Gastrocnemius medialis (tissue), 4 donors: ENCODE measurements at regions of chr2 and their contacts with region 1.

Region 1: DNA sequence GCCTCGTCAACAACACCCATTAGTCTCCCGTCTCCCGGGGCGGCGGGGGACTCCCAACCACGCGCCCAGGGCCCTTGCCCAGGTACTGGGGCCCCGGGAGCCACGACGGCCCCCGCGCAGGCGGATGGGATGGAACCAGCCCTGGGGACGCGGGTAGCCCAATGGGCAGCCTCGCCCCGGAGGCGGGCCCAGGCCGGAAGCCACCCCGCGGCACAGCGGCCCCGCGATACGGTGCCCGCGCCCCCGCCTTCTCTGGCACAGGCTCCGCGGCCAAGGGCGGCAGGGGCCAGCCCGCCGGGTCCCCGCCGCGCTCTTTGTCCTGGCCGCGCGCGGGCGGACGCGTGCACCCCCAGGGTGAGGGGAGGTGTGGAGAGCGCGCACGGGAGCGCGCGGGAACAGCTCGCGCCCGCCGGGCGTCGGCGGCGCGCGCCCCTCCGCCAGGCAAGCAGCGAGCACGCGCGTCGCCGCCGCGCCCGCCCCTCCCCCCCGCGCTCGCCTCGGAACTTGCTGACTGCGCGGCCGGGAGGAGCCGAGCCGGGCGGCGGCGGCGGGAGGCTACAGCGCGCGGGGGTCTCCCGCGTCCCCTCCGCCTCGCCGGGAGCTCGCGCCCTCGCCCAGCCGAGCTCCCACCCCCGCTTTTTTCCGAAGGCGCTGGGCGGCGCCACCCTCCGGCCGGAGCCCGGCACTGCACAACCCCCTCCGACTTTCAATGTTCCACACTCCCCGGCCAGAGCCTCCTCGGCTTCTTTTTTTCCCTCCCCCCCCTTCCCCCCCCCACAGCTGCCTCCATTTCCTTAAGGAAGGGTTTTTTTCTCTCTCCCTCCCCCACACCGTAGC is at the start of gene UBE2E3:
- DNase-seq: peak; percentile 64 to 78
- ATAC-seq: peak; percentile 85 to 87
- H3K4me3 ChIP-seq: peak within 1 kb of the TSS; percentile 71 to 87 (median 75)
- H3K27ac ChIP-seq: peak within 1 kb of the TSS; percentile 80 to 92 (median 87)
- H3K4me1 ChIP-seq: peaks cover 34 to 38% of the 10 kb centered on the region in 2 donors
- H3K27me3 ChIP-seq: no peaks in the 10 kb centered on the region
- CTCF ChIP-seq: peak; percentile 75 to 89 (median 82)
- POLR2A ChIP-seq: peak; percentile 70 to 71
- total RNA-seq, gene UBE2E3: 84.0 to 120 (median 86.4) TPM

Region 2: GRCh38 chr2:180006781-180007579 is 973.3 kb before region 1 on chr2 and contains the start of gene CWC22:
- in situ Hi-C with region 1: no loop called
- intact Hi-C with region 1: loop called (anchors 5 kb)
- DNase-seq: peak; percentile 78 to 85
- ATAC-seq: peak; percentile 99 to 100
- H3K4me3 ChIP-seq: peak within 1 kb of the TSS; percentile 84 to 99 (median 96)
- H3K27ac ChIP-seq: peak within 1 kb of the TSS; percentile 90 to 97 (median 91)
- H3K4me1 ChIP-seq: peaks cover 18 to 19% of the 10 kb centered on the region in 2 donors
- H3K27me3 ChIP-seq: no peaks in the 10 kb centered on the region
- CTCF ChIP-seq: no peak
- POLR2A ChIP-seq: peak in 1 of 2 donors; percentile 27
- total RNA-seq, gene CWC22: 9.7 to 15.6 (median 12.8) TPM

Region 3: DNA sequence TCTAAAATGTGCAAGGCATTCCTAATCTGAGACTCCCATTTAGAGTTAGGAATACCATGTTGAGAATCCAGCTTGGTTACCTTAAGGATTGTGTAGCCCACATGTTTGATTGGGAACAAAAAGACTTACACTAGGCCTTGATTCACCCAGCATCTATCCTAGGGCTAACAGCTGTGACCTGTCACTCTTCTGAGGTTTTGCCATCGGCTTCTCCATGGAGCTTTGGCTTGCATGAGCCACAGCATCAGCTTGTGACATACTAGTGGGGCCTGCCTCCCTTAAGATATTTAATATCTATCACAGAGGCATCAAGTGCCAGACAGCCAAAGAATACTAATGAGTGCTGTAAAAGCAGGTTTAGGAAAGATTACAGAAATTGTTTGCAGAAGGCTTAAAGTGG is 241.3 kb before region 1 on chr2:
- in situ Hi-C with region 1: no loop called
- intact Hi-C with region 1: loop called (anchors 5 kb)
- DNase-seq: peak; percentile 39 to 47
- ATAC-seq: peak; percentile 85 to 87
- H3K4me3 ChIP-seq: no peak overlapping the region
- H3K27ac ChIP-seq: peak overlapping the region; percentile 21 to 69 (median 40)
- H3K4me1 ChIP-seq: peaks cover 36 to 43% of the 10 kb centered on the region in 2 donors
- H3K27me3 ChIP-seq: no peaks in the 10 kb centered on the region
- CTCF ChIP-seq: no peak
- POLR2A ChIP-seq: no peak

Region 4: DNA sequence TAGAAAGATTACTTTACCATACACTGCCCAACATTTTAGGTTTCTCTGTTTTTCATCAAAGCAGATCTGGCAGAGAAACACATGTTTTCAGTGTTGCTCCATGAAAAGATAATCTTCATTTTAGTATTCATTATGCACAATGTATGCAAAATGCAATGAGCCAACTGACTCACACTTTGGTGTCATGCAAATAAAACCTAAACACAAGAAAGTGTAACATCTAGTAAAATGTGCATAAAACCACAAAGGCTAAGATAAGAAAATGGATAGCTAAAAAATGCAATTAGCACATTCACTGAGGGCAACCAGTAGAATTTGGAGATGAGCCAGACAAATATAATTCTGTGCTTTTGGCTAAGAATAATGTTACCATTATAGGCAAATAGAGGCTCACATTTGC is 203.4 kb before region 1 on chr2:
- in situ Hi-C with region 1: no loop called
- intact Hi-C with region 1: no loop called
- DNase-seq: no peak
- ATAC-seq: no peak
- H3K4me3 ChIP-seq: no peak overlapping the region
- H3K27ac ChIP-seq: no peak overlapping the region
- H3K4me1 ChIP-seq: peaks cover 0 to 6% of the 10 kb centered on the region in 2 donors
- H3K27me3 ChIP-seq: no peaks in the 10 kb centered on the region
- CTCF ChIP-seq: no peak
- POLR2A ChIP-seq: no peak

Region 5: DNA sequence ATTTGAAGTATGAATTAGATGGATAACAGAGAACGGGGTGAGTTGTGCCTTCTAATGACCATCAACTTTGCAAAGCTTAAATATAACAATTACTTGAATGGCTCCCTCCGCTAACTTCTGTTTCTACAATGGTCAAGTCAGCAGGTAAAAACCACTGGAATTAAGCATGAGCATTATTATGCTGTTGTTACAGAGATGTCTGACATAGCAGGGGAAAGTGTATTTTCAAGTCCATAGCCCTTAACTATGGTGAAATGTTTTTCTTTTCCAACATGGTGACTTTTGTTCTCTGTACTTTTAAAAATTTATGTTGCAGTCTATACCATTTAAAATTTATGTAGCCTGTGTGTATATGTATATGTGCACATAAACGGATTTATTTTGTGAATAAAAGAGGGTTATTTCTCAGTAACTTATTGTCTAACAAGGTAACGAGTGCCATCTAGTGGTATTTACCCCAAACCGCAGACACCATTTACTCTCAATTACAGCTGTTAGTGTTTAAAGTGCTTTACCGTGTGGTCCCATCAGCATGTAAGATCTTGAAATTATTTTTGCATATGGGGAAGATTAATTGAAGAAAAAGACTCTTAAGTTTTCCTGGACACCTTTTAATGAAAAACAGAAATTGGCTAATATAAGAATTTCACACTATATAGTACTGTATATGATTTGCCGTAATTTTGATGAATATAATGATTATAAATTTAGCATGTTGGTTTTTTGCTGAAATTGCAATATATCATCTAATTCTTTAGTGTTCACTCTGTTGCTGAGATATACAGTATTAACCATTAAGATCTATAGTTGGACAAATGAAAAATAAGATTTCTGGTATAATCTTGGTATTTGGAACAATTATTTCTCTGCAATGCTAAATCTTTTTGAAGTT is 78.3 kb after region 1 on chr2:
- in situ Hi-C with region 1: no loop called
- intact Hi-C with region 1: loop called (anchors 5 kb)
- DNase-seq: peak in 1 of 2 donors; percentile 11
- ATAC-seq: no peak
- H3K4me3 ChIP-seq: no peak overlapping the region
- H3K27ac ChIP-seq: no peak overlapping the region
- H3K4me1 ChIP-seq: peaks cover 0 to 7% of the 10 kb centered on the region in 2 donors
- H3K27me3 ChIP-seq: no peaks in the 10 kb centered on the region
- CTCF ChIP-seq: peak; percentile 37 to 76 (median 69)
- POLR2A ChIP-seq: no peak